Esophagus muscularis mucosa (tissue), 4 donors: ENCODE measurements at regions of chr1 and their contacts with region 1.

Region 1: GRCh38 chr1:47192458-47193384 is 2.9 kb upstream of the PDZK1IP1 start:
- DNase-seq: no peak
- H3K4me3 ChIP-seq: no peak overlapping the region
- H3K27ac ChIP-seq: no peak overlapping the region
- H3K4me1 ChIP-seq: peaks cover 10 to 38% (median 33%) of the 10 kb centered on the region in 4 donors
- H3K27me3 ChIP-seq: peaks cover 0 to 40% (median 0%) of the 10 kb centered on the region in 4 donors
- CTCF ChIP-seq: peak; percentile 85 to 95 (median 89)
- EP300 ChIP-seq: no peak
- POLR2A ChIP-seq: no peak

Region 2: GRCh38 chr1:47243910-47244309 is 51.2 kb after region 1 on chr1:
- intact Hi-C with region 1: no loop called
- DNase-seq: no peak
- H3K4me3 ChIP-seq: no peak overlapping the region
- H3K27ac ChIP-seq: no peak overlapping the region
- H3K4me1 ChIP-seq: peaks cover 0 to 3% (median 0%) of the 10 kb centered on the region in 4 donors
- H3K27me3 ChIP-seq: peaks cover 0 to 49% (median 0%) of the 10 kb centered on the region in 4 donors
- CTCF ChIP-seq: no peak
- EP300 ChIP-seq: no peak
- POLR2A ChIP-seq: no peak

Region 3: DNA sequence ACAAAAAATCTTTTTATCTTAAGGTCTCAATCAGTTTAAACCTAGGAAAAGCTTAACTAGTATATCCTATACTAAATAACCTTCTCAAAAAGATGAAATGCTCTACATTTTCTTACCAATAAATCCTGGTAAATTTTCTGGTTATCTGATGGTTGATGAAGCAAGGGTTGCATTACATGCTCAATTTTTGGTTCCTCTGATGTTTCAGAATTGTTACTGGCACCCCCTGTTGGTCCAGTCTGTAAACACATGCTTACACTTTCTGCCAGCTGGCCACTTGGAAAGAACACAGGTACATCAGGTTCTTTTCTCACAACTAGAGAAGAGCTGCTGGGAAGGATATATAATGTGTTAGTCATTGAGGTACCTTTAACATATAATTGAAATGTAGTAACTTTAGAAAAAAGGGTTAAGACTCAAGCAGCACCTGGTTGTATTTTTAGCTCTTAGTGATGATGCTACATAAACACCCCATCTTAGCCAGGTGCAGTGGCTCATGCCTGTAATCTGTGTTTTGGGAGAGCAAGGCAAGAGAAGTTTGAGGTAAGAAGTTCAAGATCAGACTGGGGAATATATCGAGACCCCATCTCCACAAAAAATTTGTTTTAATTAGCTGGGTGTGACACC is 70.2 kb after region 1 on chr1:
- intact Hi-C with region 1: loop called (anchors 5 kb)
- DNase-seq: no peak
- H3K4me3 ChIP-seq: no peak overlapping the region
- H3K27ac ChIP-seq: no peak overlapping the region
- H3K4me1 ChIP-seq: no peaks in the 10 kb centered on the region
- H3K27me3 ChIP-seq: no peaks in the 10 kb centered on the region
- CTCF ChIP-seq: peak; percentile 35 to 52 (median 47)
- EP300 ChIP-seq: no peak
- POLR2A ChIP-seq: no peak

Region 4: DNA sequence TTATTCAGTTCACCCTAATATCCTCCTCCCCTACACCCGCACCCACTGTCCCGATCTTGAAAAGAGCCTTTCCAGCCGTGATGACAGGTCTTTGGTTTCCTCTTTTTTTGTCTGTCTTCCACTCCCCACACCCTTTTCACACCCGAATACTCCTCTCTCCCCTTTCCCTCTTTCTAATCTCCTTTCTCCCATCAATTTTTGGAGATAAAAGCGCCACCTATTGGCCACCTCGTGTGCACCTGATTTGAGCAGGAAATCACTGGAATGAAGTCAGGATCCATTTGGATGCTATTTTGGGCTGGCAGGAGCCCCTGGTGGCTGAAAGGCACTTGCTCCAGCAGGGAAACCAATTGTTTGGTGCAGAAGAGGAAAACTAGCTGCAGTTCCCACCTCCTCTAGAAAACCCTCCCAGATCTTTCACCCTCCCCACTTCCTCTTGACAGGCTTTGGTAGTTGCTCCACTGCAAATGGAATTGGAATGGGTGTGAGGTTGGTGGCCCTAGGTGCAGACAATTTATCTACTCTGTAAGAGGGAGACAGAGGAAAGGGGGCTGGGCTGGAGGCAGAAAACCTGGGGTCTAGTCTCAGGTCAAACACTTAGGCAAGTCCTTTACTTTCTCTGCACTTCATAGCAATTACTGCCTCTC is 231.7 kb after region 1 on chr1:
- intact Hi-C with region 1: loop called (anchors 5 kb)
- DNase-seq: no peak
- H3K4me3 ChIP-seq: no peak overlapping the region
- H3K27ac ChIP-seq: no peak overlapping the region
- H3K4me1 ChIP-seq: no peaks in the 10 kb centered on the region
- H3K27me3 ChIP-seq: peaks cover 0 to 84% (median 0%) of the 10 kb centered on the region in 4 donors
- CTCF ChIP-seq: peak; percentile 52 to 70 (median 57)
- EP300 ChIP-seq: no peak
- POLR2A ChIP-seq: no peak

Region 5: GRCh38 chr1:47587891-47588582 is 395.3 kb after region 1 on chr1:
- intact Hi-C with region 1: no loop called
- DNase-seq: peak; percentile 89
- H3K4me3 ChIP-seq: no peak overlapping the region
- H3K27ac ChIP-seq: no peak overlapping the region
- H3K4me1 ChIP-seq: peaks cover 3 to 20% (median 4%) of the 10 kb centered on the region in 4 donors
- H3K27me3 ChIP-seq: peaks cover 0 to 81% (median 0%) of the 10 kb centered on the region in 4 donors
- CTCF ChIP-seq: no peak
- EP300 ChIP-seq: no peak
- POLR2A ChIP-seq: no peak